Calu3 (cell line): ENCODE measurements at regions of chr1 and their contacts with region 1.

Region 1: GRCh38 chr1:116418091-116418830 is 45.2 kb downstream of the ATP1A1 start:
- DNase-seq: peak; percentile 81
- H3K4me3 Mint-ChIP-seq: peak overlapping the region; percentile 84
- H3K27ac Mint-ChIP-seq: peak overlapping the region; percentile 77
- H3K4me1 Mint-ChIP-seq: no peaks in the 10 kb centered on the region
- H3K27me3 Mint-ChIP-seq: no peaks in the 10 kb centered on the region
- CTCF ChIP-seq: no peak

Region 2: GRCh38 chr1:116472431-116472961 is 54.2 kb after region 1 on chr1:
- CTCF ChIA-PET with region 1: no interaction called
- intact Hi-C with region 1: loop called (anchors 5 kb)
- DNase-seq: no peak
- H3K4me3 Mint-ChIP-seq: no peak overlapping the region
- H3K27ac Mint-ChIP-seq: no peak overlapping the region
- H3K4me1 Mint-ChIP-seq: peaks cover 33% of the 10 kb centered on the region
- H3K27me3 Mint-ChIP-seq: no peaks in the 10 kb centered on the region
- CTCF ChIP-seq: no peak